Mammary epithelial cell (primary cell): ENCODE measurements at regions of chr6 and their contacts with region 1.

Region 1: GRCh38 chr6:73969971-73970970 is 274.3 kb downstream of the CD109 start:
- DNase-seq: peak; percentile 54
- H3K4me3 ChIP-seq: no peak overlapping the region
- H3K27ac ChIP-seq: no peak overlapping the region
- H3K4me1 ChIP-seq: no peaks in the 10 kb centered on the region
- H3K27me3 ChIP-seq: no peaks in the 10 kb centered on the region
- CTCF ChIP-seq: peak; percentile 80 to 82

Region 2: DNA sequence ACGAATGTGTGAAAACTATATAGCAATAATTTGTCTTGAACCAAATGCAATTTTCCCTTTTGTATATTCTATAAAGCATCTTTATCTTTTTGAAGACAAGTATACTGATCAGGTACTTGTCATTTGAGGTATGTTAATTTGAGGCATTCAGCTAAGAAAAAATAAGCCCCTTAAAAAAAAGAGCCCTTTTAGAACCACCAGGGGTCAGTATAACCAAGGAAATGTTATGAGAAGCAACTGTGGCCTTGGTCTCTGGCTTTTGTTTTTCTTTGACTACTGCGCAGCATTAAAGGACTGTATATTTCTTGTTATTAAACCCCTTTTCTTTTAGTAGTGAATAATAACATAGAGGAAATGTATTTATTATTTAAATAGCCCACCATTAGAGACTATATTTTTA is 231.2 kb before region 1 on chr6:
- CTCF ChIA-PET with region 1: interaction called, 3 read pairs
- dilution Hi-C with region 1: no loop called
- in situ Hi-C with region 1: no loop called
- intact Hi-C with region 1: loop called (anchors 1 kb)
- DNase-seq: peak; percentile 23
- H3K4me3 ChIP-seq: no peak overlapping the region
- H3K27ac ChIP-seq: no peak overlapping the region
- H3K4me1 ChIP-seq: no peaks in the 10 kb centered on the region
- H3K27me3 ChIP-seq: no peaks in the 10 kb centered on the region
- CTCF ChIP-seq: peak; percentile 58 to 62

Region 3: GRCh38 chr6:73766040-73766439 is 204.2 kb before region 1 on chr6:
- CTCF ChIA-PET with region 1: interaction called, 12 read pairs
- dilution Hi-C with region 1: no loop called
- in situ Hi-C with region 1: no loop called
- intact Hi-C with region 1: no loop called
- DNase-seq: no peak
- H3K4me3 ChIP-seq: no peak overlapping the region
- H3K27ac ChIP-seq: no peak overlapping the region
- H3K4me1 ChIP-seq: no peaks in the 10 kb centered on the region
- H3K27me3 ChIP-seq: no peaks in the 10 kb centered on the region
- CTCF ChIP-seq: no peak

Region 4: DNA sequence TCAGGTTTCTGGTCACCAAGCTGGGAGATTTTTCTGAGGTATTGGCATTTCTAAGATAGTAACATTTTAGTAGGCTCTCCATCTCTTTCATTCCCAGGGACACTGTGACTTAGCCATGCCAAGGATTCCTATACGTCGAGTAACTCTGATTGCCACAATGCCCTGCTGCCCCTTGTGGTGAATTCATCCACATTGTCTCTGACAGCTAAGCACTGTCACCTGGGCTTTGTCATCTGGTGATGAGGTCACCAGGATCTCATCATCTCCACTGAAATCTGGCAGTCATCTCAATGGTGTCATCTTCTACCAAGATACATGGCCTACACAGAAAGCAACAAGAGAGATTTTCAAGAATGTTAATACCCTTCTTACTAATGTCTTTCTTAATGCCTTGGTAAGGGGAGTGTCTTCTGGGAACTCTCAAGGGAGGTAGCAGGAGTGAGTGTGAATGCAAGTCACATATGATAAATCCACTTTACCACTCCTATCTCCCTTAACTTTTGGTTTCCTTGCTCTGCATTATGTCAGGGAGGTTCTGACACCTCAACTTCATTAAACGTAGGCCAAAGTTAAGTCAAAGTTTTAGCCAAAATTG is 27.6 kb before region 1 on chr6:
- CTCF ChIA-PET with region 1: no interaction called
- dilution Hi-C with region 1: no loop called
- in situ Hi-C with region 1: no loop called
- intact Hi-C with region 1: no loop called
- DNase-seq: peak; percentile 38
- H3K4me3 ChIP-seq: no peak overlapping the region
- H3K27ac ChIP-seq: no peak overlapping the region
- H3K4me1 ChIP-seq: no peaks in the 10 kb centered on the region
- H3K27me3 ChIP-seq: peaks cover 3% of the 10 kb centered on the region
- CTCF ChIP-seq: peak; percentile 7 to 39

Region 5: DNA sequence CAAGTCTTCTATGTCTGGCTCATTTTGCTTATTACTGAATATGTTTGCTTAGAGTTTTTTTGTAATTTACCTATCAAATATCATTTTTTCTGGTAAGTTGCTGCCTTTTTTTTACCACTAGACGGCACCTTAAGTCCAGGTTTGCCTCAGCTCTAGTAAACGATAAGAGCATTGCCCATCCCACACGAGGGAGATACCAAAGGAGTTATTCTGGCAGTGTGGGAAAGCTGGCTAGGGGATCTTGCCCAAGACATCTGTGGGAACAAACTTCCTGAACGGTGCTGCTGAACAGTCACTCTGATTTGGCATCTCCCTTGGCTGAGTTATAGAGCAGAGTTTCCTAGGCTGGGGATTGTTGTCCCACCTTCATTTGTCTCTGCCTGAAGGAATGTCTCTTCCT is 929.1 kb after region 1 on chr6:
- CTCF ChIA-PET with region 1: no interaction called
- dilution Hi-C with region 1: no loop called
- in situ Hi-C with region 1: no loop called
- intact Hi-C with region 1: loop called (anchors 10 kb)
- DNase-seq: peak; percentile 79
- H3K4me3 ChIP-seq: no peak overlapping the region
- H3K27ac ChIP-seq: peak overlapping the region; percentile 31
- H3K4me1 ChIP-seq: peaks cover 10% of the 10 kb centered on the region
- H3K27me3 ChIP-seq: no peaks in the 10 kb centered on the region
- CTCF ChIP-seq: peak; percentile 83 to 95